Activated CD4-positive, alpha-beta memory T cell treated with anti-CD3 and anti-CD28 coated beads, Interleukin-2, amount 10 ng/mL, durations not matched to agents 7 days and 5 days (primary cell): ENCODE measurements at regions of chr17 and their contacts with region 1.

Region 1: DNA sequence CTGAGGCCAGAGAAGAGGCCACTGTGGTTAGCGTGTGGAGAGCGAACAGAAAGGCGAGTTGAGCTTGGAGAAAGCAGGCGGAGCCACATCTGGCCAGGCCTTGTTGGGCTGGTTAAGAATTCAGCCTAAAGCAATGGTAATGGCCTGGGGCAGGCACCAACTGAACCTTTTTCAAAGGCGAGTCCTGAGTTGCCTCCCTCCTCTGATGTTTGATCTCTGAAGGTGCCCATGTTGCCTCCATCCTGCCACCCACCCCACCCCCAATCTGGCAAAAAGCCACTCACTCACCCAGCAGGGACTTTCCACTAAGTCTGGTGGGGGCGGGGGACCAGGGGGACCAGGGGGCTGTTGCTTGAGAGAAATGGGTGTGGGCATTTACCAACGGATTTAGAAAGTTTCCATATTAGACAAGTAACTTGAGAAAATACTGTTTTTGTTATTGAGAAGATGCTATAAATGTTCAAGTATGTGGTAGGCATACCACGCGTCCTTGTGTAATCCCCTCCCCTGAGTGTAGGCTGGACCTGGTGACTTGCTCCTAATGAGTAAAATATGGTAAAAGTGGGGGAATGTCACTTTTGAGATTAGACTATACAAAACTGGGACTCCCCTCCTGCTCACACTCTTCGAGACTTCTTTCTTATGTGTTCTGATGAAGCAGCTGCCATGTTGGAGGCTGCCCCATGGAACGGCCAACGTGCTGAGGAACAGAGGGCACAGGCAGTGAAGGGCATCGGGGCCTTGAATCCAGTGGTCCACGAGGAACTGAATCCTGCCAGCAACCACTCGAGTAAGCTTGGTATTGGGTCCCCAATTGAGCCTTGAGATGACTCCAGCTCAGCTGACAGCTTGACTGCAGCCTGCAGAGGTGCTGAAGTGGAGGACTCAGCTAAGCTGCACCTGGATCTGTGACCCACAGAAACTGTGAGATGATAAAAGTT is 29.9 kb upstream of the TNS4 start:
- DNase-seq: peak; percentile 64
- H3K4me3 Mint-ChIP-seq: peak overlapping the region; percentile 13
- H3K27ac Mint-ChIP-seq: peak overlapping the region; percentile 72
- H3K4me1 Mint-ChIP-seq: peaks cover 75% of the 10 kb centered on the region
- H3K27me3 Mint-ChIP-seq: peaks cover 15% of the 10 kb centered on the region

Region 2: DNA sequence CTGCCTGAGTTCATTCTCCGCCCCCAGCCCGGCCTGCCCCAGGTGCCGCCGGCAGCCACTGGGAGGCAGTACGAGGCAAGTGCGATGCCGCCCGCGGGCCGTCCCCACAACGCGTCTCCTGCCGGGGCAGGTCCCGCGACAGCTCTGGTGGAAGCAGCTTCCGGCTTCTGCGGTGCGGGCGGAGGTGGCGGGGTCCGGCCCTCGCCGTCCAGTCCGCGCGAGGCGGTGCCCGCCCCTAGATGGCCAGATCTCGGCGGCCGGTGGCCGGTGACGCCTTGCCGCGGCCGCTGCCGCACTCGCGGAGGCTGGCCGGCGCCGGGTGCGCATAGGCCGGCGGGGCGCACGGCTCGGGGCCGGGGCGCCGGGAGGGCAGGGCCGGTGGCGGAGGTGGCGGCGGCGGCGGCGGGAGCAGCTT is 168.6 kb before region 1 on chr17:
- CTCF ChIA-PET with region 1: interaction called, 44 read pairs
- POLR2A ChIA-PET with region 1: interaction called, 22 read pairs
- DNase-seq: peak; percentile 90
- H3K4me3 Mint-ChIP-seq: peak overlapping the region; percentile 56
- H3K27ac Mint-ChIP-seq: no peak overlapping the region
- H3K4me1 Mint-ChIP-seq: peaks cover 21% of the 10 kb centered on the region
- H3K27me3 Mint-ChIP-seq: peaks cover 21% of the 10 kb centered on the region

Region 3: GRCh38 chr17:40417609-40418427 is 113.5 kb before region 1 on chr17 and contains the start of gene TOP2A:
- CTCF ChIA-PET with region 1: interaction called, 102 read pairs
- POLR2A ChIA-PET with region 1: interaction called, 90 read pairs
- DNase-seq: peak; percentile 97
- H3K4me3 Mint-ChIP-seq: peak within 1 kb of the TSS; percentile 97
- H3K27ac Mint-ChIP-seq: peak within 1 kb of the TSS; percentile 92
- H3K4me1 Mint-ChIP-seq: peaks cover 47% of the 10 kb centered on the region
- H3K27me3 Mint-ChIP-seq: peaks cover 4% of the 10 kb centered on the region
- total RNA-seq, gene TOP2A: 361 to 373 TPM

Region 4: DNA sequence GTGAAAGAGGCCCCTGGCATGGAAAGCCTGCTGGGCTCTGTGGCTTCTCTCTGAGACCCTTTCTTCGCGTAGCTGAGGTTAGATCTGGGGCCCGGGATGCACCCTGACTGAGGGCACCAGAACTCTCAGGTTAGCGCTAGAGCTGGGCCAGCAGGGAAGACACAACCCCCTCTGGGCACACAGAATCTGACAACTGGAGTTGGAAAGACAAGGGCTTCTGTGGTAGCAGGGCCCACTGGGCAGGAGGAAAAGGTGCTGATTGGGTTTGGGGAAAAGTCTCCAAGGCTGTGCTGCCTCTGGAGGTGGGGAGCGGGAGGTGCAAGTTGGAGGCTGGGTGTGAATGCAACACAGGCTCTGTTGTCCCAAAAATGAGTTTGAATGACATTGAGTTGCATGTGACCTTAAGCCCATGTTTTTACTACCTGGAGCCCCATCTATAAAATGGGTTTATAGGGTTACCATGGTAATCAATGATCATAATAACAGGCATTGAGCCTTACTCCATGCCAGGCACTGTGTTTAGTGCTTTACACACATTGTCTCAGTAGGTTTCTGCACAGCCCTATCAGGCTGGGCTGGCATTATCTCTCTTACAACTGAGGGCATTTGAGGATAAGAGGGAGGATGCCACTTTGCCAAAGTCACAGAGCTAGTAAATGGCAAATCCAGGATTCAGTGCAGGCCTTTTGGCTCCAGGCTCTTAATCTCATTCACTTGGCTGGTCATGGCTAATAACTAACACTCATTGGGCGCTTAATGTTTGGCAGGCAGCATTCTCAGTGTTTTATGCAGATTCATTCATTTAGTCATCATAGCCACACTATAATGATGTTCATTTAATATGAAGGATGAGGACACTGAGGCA is 97.5 kb before region 1 on chr17:
- CTCF ChIA-PET with region 1: interaction called, 18 read pairs
- POLR2A ChIA-PET with region 1: no interaction called
- DNase-seq: peak; percentile 44
- H3K4me3 Mint-ChIP-seq: no peak overlapping the region
- H3K27ac Mint-ChIP-seq: no peak overlapping the region
- H3K4me1 Mint-ChIP-seq: peaks cover 14% of the 10 kb centered on the region
- H3K27me3 Mint-ChIP-seq: peaks cover 31% of the 10 kb centered on the region

Region 5: DNA sequence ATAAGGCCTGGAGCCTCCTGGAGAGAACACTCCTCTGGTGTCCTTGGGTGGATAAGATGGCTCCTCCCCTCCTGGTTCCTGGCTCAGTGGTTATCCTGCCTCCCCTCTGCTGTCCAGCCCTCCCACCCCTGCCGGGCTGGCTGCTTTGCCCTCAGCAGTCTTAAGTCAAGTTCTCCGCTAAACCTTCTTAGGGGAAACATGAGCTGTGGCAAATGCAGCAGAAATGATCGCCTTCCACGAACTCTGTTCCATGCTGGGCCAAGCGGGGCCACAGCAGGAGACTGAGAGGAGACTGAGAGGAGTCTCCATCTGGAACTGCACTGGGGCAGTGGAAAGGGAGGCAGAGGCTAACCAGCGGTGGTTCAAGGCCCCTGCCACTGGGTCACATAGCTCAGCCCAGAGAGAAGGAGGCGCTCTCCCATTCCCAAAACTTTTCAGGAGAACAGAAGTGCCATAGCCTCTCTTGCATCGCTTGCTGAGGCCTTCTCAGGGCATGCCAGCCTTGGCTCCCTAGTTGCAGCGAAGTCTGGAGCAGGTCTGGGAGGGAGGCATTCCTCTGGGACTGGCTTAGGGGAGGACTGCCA is 56.8 kb before region 1 on chr17:
- CTCF ChIA-PET with region 1: interaction called, 57 read pairs
- POLR2A ChIA-PET with region 1: interaction called, 110 read pairs
- DNase-seq: no peak
- H3K4me3 Mint-ChIP-seq: no peak overlapping the region
- H3K27ac Mint-ChIP-seq: no peak overlapping the region
- H3K4me1 Mint-ChIP-seq: peaks cover 30% of the 10 kb centered on the region
- H3K27me3 Mint-ChIP-seq: peaks cover 11% of the 10 kb centered on the region

Region 6: GRCh38 chr17:40516581-40517285 is 14.6 kb before region 1 on chr17:
- CTCF ChIA-PET with region 1: interaction called, 59 read pairs
- POLR2A ChIA-PET with region 1: interaction called, 118 read pairs
- DNase-seq: peak; percentile 87
- H3K4me3 Mint-ChIP-seq: peak overlapping the region; percentile 80
- H3K27ac Mint-ChIP-seq: peak overlapping the region; percentile 92
- H3K4me1 Mint-ChIP-seq: peaks cover 80% of the 10 kb centered on the region
- H3K27me3 Mint-ChIP-seq: peaks cover 2% of the 10 kb centered on the region

Region 7: GRCh38 chr17:40551879-40552768 is 20.8 kb after region 1 on chr17:
- CTCF ChIA-PET with region 1: interaction called, 266 read pairs
- POLR2A ChIA-PET with region 1: interaction called, 11 read pairs
- DNase-seq: peak; percentile 15
- H3K4me3 Mint-ChIP-seq: no peak overlapping the region
- H3K27ac Mint-ChIP-seq: no peak overlapping the region
- H3K4me1 Mint-ChIP-seq: peaks cover 57% of the 10 kb centered on the region
- H3K27me3 Mint-ChIP-seq: peaks cover 6% of the 10 kb centered on the region